ENCODE measurements at regions of chr11 and their contacts with region 1.

Region 1: GRCh38 chr11:75717608-75718418 is at the start of gene MOGAT2:
- DNase-seq: no peak
- ATAC-seq: peak; percentile 82
- total RNA-seq, gene MOGAT2: 0.13 TPM

Region 2: GRCh38 chr11:75689863-75690609 is 27.8 kb before region 1 on chr11:
- intact Hi-C with region 1: no loop called
- DNase-seq: no peak
- ATAC-seq: no peak

Region 3: GRCh38 chr11:75768112-75768908 is 50.5 kb after region 1 on chr11 and contains the start of gene DGAT2:
- intact Hi-C with region 1: loop called (anchors 10 kb)
- DNase-seq: peak; percentile 91
- ATAC-seq: peak; percentile 97
- total RNA-seq, gene DGAT2: 20.7 TPM

Region 4: DNA sequence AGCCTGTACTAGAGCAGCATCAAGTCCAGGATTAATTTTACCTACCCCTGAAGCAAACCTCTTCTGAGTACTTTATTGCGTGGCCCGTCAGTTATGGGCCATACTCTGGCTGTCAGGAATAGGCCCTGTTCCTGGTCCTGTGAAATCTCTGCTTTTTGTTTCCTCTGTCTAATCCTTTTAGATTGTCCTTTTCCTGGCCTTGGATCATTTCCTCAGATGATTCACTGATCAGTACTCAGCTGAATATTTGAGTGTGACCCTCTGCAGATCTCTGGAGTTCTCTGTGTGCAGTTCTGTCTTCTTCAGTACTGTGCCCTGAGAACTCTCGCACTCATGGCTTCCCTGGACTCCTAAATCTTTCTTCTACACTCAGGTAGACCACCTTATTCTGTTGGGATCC is 220.7 kb after region 1 on chr11:
- intact Hi-C with region 1: no loop called
- DNase-seq: no peak
- ATAC-seq: peak; percentile 36

Measured in Right ventricle myocardium superior (tissue), 1 donor.